Heart right ventricle (tissue), 16 donors: ENCODE measurements at regions of chr7 and their contacts with region 1.

Region 1: GRCh38 chr7:82284936-82285519 is 158.5 kb downstream of the CACNA2D1 start:
- DNase-seq: no peak
- ATAC-seq: peak in 1 of 8 donors; percentile 53
- H3K4me3 ChIP-seq: no peak overlapping the region
- H3K27ac ChIP-seq: peak overlapping the region in 8 of 10 donors; percentile 47 to 91 (median 71)
- H3K4me1 ChIP-seq: peaks cover 0 to 45% (median 23%) of the 10 kb centered on the region in 9 donors
- H3K27me3 ChIP-seq: no peaks in the 10 kb centered on the region
- CTCF ChIP-seq: no peak

Region 2: DNA sequence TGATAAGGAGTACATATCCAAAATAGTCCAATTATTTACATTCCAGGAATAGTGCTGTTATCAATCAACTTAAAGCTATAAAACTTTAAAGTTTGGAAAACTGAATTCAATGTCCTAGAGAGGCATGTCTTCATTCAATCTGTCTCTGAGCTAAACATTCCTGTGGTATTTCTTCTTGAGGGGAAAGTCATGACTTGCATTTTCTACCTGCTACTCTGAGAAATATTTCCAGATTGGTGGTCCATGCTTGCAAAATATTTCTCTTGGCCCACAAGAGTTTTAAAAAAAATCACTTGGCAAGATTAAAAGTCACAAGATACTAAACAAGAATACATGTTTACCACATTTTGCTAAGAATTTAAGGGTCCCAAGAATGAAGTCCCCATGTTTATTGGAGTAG is 451.6 kb before region 1 on chr7:
- intact Hi-C with region 1: no loop called
- DNase-seq: no peak
- ATAC-seq: no peak
- H3K4me3 ChIP-seq: no peak overlapping the region
- H3K27ac ChIP-seq: no peak overlapping the region
- H3K4me1 ChIP-seq: no peaks in the 10 kb centered on the region
- H3K27me3 ChIP-seq: no peaks in the 10 kb centered on the region
- CTCF ChIP-seq: no peak

Region 3: GRCh38 chr7:82247814-82248433 is 37.1 kb before region 1 on chr7:
- intact Hi-C with region 1: loop called in 1 of 10 experiments (anchors 5 kb)
- DNase-seq: no peak
- ATAC-seq: peak in 5 of 8 donors; percentile 55 to 67 (median 58)
- H3K4me3 ChIP-seq: no peak overlapping the region
- H3K27ac ChIP-seq: no peak overlapping the region
- H3K4me1 ChIP-seq: peaks cover 0 to 35% (median 8%) of the 10 kb centered on the region in 9 donors
- H3K27me3 ChIP-seq: no peaks in the 10 kb centered on the region
- CTCF ChIP-seq: peak in 7 of 9 donors; percentile 27 to 60 (median 48)

Region 4: DNA sequence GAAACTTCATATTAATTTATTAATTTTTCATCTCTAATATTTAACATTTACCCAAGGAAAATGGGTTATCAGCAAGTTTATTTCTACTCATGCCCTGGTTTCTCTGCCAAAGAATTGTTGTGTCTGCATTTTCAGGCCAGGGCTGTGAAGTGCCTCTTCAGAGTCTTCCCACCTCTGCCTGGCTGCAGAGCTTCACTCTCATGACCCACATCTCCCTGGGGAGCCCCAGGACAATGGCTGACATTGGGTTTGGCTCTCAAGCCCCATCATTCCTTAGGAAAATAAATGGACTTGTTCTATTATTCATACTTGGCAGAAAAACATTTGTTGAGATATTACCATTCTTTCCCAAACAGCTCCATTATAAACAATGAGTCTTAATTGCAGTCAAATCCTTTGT is 128.2 kb after region 1 on chr7:
- intact Hi-C with region 1: no loop called
- DNase-seq: peak in 1 of 2 donors; percentile 15
- ATAC-seq: peak in 3 of 8 donors; percentile 43 to 56 (median 43)
- H3K4me3 ChIP-seq: no peak overlapping the region
- H3K27ac ChIP-seq: peak overlapping the region in 1 of 10 donors; percentile 86
- H3K4me1 ChIP-seq: peaks cover 0 to 58% (median 12%) of the 10 kb centered on the region in 9 donors
- H3K27me3 ChIP-seq: no peaks in the 10 kb centered on the region
- CTCF ChIP-seq: no peak

Region 5: DNA sequence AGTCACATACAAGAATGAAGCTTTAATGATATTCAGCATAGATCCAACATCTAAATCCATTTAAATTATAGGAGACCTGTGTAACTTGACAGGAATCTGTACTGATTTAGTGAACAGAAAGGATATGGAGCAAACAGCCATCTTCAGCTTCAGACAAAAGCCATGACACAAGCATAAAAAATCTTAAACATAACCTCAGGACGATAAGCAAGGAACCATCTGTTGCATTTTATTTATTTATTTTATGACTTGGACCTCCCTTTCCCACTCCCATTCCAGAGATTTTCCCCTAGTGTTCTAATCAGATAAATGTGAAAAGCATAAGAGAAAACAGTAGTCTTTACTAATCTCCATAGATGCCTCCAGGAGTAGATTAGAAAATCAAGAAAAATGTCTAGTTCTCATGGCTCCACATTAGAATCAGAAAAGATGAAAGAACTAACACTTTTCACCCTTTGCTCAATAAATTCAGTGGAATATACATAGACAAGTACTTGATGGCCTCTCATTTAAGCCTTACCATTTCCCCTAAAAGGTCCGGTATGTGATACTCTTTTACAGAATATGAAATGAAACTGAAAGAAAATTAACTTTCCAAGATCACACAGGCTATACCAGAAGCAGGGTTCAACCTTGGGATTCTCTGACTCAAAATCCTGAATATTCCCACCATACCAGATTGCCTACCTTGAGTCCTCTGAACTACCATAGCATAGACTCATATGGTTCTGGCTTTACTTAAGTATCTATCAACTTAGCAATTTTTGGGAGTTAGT is 143.3 kb after region 1 on chr7:
- intact Hi-C with region 1: loop called in 1 of 10 experiments (anchors 1 kb)
- DNase-seq: no peak
- ATAC-seq: no peak
- H3K4me3 ChIP-seq: no peak overlapping the region
- H3K27ac ChIP-seq: peak overlapping the region in 1 of 10 donors; percentile 16
- H3K4me1 ChIP-seq: peaks cover 0 to 19% (median 6%) of the 10 kb centered on the region in 9 donors
- H3K27me3 ChIP-seq: no peaks in the 10 kb centered on the region
- CTCF ChIP-seq: no peak

Region 6: GRCh38 chr7:82534683-82535082 is 249.7 kb after region 1 on chr7:
- intact Hi-C with region 1: no loop called
- DNase-seq: no peak
- ATAC-seq: peak in 1 of 8 donors; percentile 39
- H3K4me3 ChIP-seq: no peak overlapping the region
- H3K27ac ChIP-seq: no peak overlapping the region
- H3K4me1 ChIP-seq: no peaks in the 10 kb centered on the region
- H3K27me3 ChIP-seq: no peaks in the 10 kb centered on the region
- CTCF ChIP-seq: no peak